ENCODE measurements at regions of chrX and their contacts with region 1.

Region 1: GRCh38 chrX:71283403-71284143 is at the start of gene NONO:
- DNase-seq: peak; percentile 96
- ATAC-seq: peak; percentile 91
- H3K4me3 ChIP-seq: peak within 1 kb of the TSS; percentile 55 to 83 (median 68)
- H3K4me3 Mint-ChIP-seq: peak within 1 kb of the TSS; percentile 95
- H3K27ac ChIP-seq: peak within 1 kb of the TSS; percentile 94 to 95
- H3K27ac Mint-ChIP-seq: peak within 1 kb of the TSS; percentile 98
- H3K4me1 ChIP-seq: peaks cover 16 to 21% of the 10 kb centered on the region in 2 donors
- H3K4me1 Mint-ChIP-seq: peaks cover 23% of the 10 kb centered on the region
- H3K27me3 ChIP-seq: no peaks in the 10 kb centered on the region
- H3K27me3 Mint-ChIP-seq: no peaks in the 10 kb centered on the region
- CTCF ChIP-seq: no peak
- total RNA-seq, gene NONO: 286 TPM in 2 replicates

Region 2: DNA sequence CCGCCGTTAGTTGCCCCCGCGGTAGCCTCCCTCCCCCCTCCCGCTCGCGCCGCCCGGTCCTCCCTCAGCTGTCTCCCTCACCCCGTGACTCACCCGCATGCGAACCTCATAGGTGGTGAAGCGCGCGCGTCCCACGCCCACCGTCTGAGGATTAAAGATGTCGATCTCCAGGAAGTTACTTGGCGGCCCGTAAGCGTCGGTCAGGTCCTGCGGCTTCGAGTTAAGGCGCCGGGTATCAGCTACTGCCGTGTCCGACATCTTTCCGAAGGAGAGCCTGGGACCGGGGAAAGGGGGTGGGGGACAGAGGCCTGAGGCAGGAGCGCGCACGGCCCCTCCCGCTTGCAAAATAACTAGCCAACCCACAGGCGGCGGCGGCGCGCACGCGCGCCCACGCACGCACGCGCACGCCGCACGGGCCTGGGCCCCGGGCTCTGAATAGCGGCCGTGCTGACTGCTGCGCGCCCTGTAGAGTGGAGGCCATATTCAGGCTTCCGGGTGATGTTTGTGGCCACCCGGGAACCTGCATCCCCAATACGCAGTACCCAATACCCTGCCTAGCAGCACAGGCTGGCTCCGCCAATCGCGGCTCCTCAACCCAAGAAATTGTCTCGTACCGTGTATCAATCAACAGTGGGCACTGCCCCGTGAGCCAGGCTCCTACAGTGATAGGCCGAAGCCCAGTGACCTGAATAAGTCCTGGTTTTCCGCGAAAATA is 215.4 kb before region 1 on chrX and contains the start of gene SNX12:
- CTCF ChIA-PET with region 1: no interaction called
- POLR2A ChIA-PET with region 1: no interaction called
- intact Hi-C with region 1: loop called (anchors 1 kb)
- DNase-seq: peak; percentile 93
- ATAC-seq: peak; percentile 93
- H3K4me3 ChIP-seq: peak within 1 kb of the TSS; percentile 74 to 79 (median 76)
- H3K4me3 Mint-ChIP-seq: peak within 1 kb of the TSS; percentile 96
- H3K27ac ChIP-seq: peak within 1 kb of the TSS; percentile 74 to 85
- H3K27ac Mint-ChIP-seq: peak within 1 kb of the TSS; percentile 96
- H3K4me1 ChIP-seq: peaks cover 0 to 12% of the 10 kb centered on the region in 2 donors
- H3K4me1 Mint-ChIP-seq: peaks cover 17% of the 10 kb centered on the region
- H3K27me3 ChIP-seq: no peaks in the 10 kb centered on the region
- H3K27me3 Mint-ChIP-seq: no peaks in the 10 kb centered on the region
- CTCF ChIP-seq: no peak
- total RNA-seq, gene SNX12: 32.6 and 42.9 TPM in 2 replicates

Region 3: GRCh38 chrX:71118032-71118984 is 165.3 kb before region 1 on chrX and contains the start of gene MED12:
- CTCF ChIA-PET with region 1: no interaction called
- POLR2A ChIA-PET with region 1: no interaction called
- intact Hi-C with region 1: loop called (anchors 1 kb)
- DNase-seq: peak; percentile 83
- ATAC-seq: peak; percentile 97
- H3K4me3 ChIP-seq: peak within 1 kb of the TSS; percentile 70 to 78 (median 74)
- H3K4me3 Mint-ChIP-seq: peak within 1 kb of the TSS; percentile 88
- H3K27ac ChIP-seq: peak within 1 kb of the TSS; percentile 85 to 90
- H3K27ac Mint-ChIP-seq: peak within 1 kb of the TSS; percentile 91
- H3K4me1 ChIP-seq: peaks cover 17 to 27% of the 10 kb centered on the region in 2 donors
- H3K4me1 Mint-ChIP-seq: peaks cover 17% of the 10 kb centered on the region
- H3K27me3 ChIP-seq: no peaks in the 10 kb centered on the region
- H3K27me3 Mint-ChIP-seq: no peaks in the 10 kb centered on the region
- CTCF ChIP-seq: no peak
- total RNA-seq, gene MED12: 118 and 123 TPM in 2 replicates

Region 4: DNA sequence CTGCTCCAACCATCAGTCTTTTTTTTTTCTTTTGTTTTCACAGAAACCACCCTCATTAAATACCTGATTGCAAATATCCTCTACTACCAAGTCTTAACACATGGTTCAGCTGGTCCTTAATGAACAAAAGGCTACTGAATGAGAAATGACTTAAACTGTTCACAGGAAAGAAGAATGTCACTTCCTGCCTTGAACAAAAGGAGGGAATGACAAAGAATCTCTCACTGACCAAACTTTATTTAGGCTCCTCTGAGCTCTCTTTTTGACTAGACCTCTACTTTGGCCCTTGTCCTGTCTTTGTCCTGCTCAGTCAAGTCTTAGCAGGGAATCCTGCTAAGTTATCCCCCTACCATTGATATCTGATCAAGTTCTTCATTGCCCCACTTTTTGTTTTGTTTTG is 92.3 kb before region 1 on chrX:
- CTCF ChIA-PET with region 1: no interaction called
- POLR2A ChIA-PET with region 1: no interaction called
- intact Hi-C with region 1: no loop called
- DNase-seq: no peak
- ATAC-seq: no peak
- H3K4me3 ChIP-seq: no peak overlapping the region
- H3K4me3 Mint-ChIP-seq: no peak overlapping the region
- H3K27ac ChIP-seq: no peak overlapping the region
- H3K27ac Mint-ChIP-seq: no peak overlapping the region
- H3K4me1 ChIP-seq: peaks cover 8% of the 10 kb centered on the region in 2 donors
- H3K4me1 Mint-ChIP-seq: peaks cover 22% of the 10 kb centered on the region
- H3K27me3 ChIP-seq: no peaks in the 10 kb centered on the region
- H3K27me3 Mint-ChIP-seq: no peaks in the 10 kb centered on the region
- CTCF ChIP-seq: no peak

Region 5: GRCh38 chrX:71304561-71304960 is 21.0 kb after region 1 on chrX:
- CTCF ChIA-PET with region 1: no interaction called
- POLR2A ChIA-PET with region 1: interaction called, 12 read pairs
- intact Hi-C with region 1: no loop called
- DNase-seq: no peak
- ATAC-seq: no peak
- H3K4me3 ChIP-seq: no peak overlapping the region
- H3K4me3 Mint-ChIP-seq: no peak overlapping the region
- H3K27ac ChIP-seq: no peak overlapping the region
- H3K27ac Mint-ChIP-seq: no peak overlapping the region
- H3K4me1 ChIP-seq: no peaks in the 10 kb centered on the region
- H3K4me1 Mint-ChIP-seq: no peaks in the 10 kb centered on the region
- H3K27me3 ChIP-seq: no peaks in the 10 kb centered on the region
- H3K27me3 Mint-ChIP-seq: no peaks in the 10 kb centered on the region
- CTCF ChIP-seq: no peak

Region 6: GRCh38 chrX:71365876-71366673 is 82.5 kb after region 1 on chrX and contains the start of gene TAF1:
- CTCF ChIA-PET with region 1: interaction called, 3 read pairs
- POLR2A ChIA-PET with region 1: interaction called, 19 read pairs
- intact Hi-C with region 1: loop called (anchors 1 kb)
- DNase-seq: peak; percentile 94
- ATAC-seq: peak; percentile 90
- H3K4me3 ChIP-seq: peak within 1 kb of the TSS; percentile 67 to 78 (median 73)
- H3K4me3 Mint-ChIP-seq: peak within 1 kb of the TSS; percentile 97
- H3K27ac ChIP-seq: peak within 1 kb of the TSS; percentile 80 to 95
- H3K27ac Mint-ChIP-seq: peak within 1 kb of the TSS; percentile 99
- H3K4me1 ChIP-seq: peaks cover 12 to 24% of the 10 kb centered on the region in 2 donors
- H3K4me1 Mint-ChIP-seq: peaks cover 24% of the 10 kb centered on the region
- H3K27me3 ChIP-seq: no peaks in the 10 kb centered on the region
- H3K27me3 Mint-ChIP-seq: no peaks in the 10 kb centered on the region
- CTCF ChIP-seq: no peak
- total RNA-seq, gene TAF1: 93.5 and 97.5 TPM in 2 replicates

Measured in B cell (primary cell).